ENCODE measurements at regions of chr3 and their contacts with region 1.

Region 1: DNA sequence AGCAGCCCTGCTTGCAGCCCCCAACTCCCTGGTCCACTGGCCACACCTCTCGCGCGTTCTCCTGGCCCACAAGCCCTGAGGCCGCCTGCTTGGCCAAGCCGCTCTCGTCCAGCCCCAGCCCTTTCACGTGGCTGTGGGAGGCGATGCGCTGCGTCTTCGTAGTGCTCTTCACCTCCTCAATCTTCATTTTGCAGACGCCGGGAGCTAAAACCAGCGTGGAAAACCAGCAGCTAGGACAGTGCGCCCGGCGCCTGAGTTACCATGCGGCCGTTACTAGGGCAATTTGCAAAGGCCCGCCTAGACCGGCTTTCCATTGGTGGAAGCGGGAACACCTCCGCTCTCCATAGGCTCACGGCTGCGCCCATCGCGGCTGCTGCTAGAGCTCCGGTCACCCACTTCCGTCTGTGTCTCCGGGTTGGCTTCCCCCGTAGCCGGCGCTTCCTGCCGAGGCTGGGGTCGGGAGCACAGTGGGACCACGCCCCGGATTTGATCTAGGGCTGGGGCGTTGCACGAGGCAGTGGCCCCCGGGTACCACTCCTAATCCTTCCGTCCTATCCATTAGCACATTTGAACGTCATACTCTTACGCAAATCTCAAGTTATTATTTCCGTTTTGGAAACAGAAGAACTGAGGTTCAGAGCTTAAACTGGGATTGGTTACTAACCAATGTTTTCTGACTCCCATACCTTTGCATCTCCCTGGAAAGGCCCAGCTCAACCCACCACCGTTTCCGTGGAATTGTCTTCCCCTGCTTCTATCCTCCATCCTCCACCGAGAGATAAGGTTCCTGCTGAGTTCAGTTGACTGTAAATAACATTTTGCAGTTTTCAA is at the start of gene RUVBL1:
- H3K4me3 ChIP-seq: peak within 1 kb of the TSS; percentile 96
- H3K27ac ChIP-seq: peak within 1 kb of the TSS; percentile 11; the same call in 1 of the 2 replicates
- H3K4me1 ChIP-seq: no peaks in the 10 kb centered on the region
- CTCF ChIP-seq: no peak

Region 2: GRCh38 chr3:128153156-128154041 is 29.6 kb after region 1 on chr3 and contains the start of gene EEFSEC:
- CTCF ChIA-PET with region 1: no interaction called
- POLR2A ChIA-PET with region 1: interaction called, 12 read pairs
- H3K4me3 ChIP-seq: peak within 1 kb of the TSS; percentile 96
- H3K27ac ChIP-seq: peak within 1 kb of the TSS; percentile 80; the same call in 1 of the 2 replicates
- H3K4me1 ChIP-seq: no peaks in the 10 kb centered on the region
- CTCF ChIP-seq: no peak